ENCODE measurements at regions of chr19 and their contacts with region 1.

Region 1: GRCh38 chr19:49877020-49877878 is at the starts of genes AKT1S1 and TBC1D17:
- DNase-seq: peak; percentile 98 to 100 (median 99)
- H3K4me3 ChIP-seq: peak within 1 kb of the TSS; percentile 71 to 100 (median 96)
- H3K27ac ChIP-seq: peak within 1 kb of the TSS; percentile 93 to 100 (median 100)
- H3K27me3 ChIP-seq: no peaks in the 10 kb centered on the region
- CTCF ChIP-seq: peak in 4 of 56 donors; percentile 6 to 13 (median 11)
- total RNA-seq, gene AKT1S1: 19.9 to 42.2 (median 27.8) TPM
- total RNA-seq, gene TBC1D17: 61.4 to 116 (median 85.9) TPM

Region 2: DNA sequence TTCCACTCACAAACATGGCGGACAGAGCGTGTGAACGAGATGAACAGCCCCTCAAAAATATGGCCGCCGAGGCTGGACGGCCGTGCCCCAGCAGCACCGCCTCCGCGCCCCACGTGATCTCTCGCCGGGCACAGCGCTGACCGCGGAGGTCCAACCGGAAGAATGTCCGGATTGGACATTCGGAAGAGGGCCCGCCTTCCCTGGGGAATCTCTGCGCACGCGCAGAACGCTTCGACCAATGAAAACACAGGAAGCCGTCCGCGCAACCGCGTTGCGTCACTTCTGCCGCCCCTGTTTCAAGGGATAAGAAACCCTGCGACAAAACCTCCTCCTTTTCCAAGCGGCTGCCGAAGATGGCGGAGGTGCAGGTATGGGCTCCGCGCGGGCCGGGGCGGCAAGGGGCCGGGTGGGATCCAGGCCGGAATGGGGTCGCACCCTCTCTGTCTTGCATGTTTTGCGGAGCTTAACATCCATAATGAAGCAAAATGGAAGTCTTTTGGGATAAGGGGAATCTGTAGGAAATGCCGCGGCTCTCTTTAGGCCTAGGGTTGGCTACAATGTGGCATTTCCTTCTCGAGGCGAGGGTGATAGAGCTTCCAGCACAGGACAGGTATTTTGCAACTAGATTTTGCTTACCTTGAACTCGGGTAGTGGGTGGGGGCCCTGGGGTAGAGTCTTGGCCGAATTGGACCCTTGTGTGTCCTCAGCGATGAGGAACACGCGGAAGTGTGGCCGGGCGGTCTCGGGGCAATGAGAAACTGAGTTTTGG is 389.8 kb before region 1 on chr19 and contains the start of gene RPL13A:
- intact Hi-C with region 1: loop called in 1 of 2 experiments (anchors 10 kb)
- DNase-seq: peak; percentile 97 to 100 (median 99)
- H3K4me3 ChIP-seq: peak within 1 kb of the TSS; percentile 72 to 100 (median 95)
- H3K27ac ChIP-seq: peak within 1 kb of the TSS; percentile 21 to 99 (median 95)
- H3K27me3 ChIP-seq: no peaks in the 10 kb centered on the region
- CTCF ChIP-seq: peak in 30 of 56 donors; percentile 10 to 65 (median 26)
- total RNA-seq, gene RPL13A: 564 to 1,173 (median 771) TPM